Pancreas (tissue), 10 donors: ENCODE measurements at regions of chr22 and their contacts with region 1.

Region 1: GRCh38 chr22:21938071-21938822 is 14.4 kb downstream of the PPM1F start:
- DNase-seq: peak; percentile 91 to 100 (median 94)
- ATAC-seq: peak; percentile 91 to 94 (median 91)
- H3K4me3 ChIP-seq: peak overlapping the region; percentile 26 to 60 (median 48)
- H3K27ac ChIP-seq: peak overlapping the region; percentile 89 to 94 (median 92)
- H3K4me1 ChIP-seq: peaks cover 0 to 19% (median 14%) of the 10 kb centered on the region in 3 donors
- H3K27me3 ChIP-seq: no peaks in the 10 kb centered on the region
- CTCF ChIP-seq: peak; percentile 97 to 100 (median 100)

Region 2: GRCh38 chr22:21707677-21708076 is 230.6 kb before region 1 on chr22:
- intact Hi-C with region 1: loop called in 2 of 3 experiments (anchors 5 to 10 kb)
- DNase-seq: no peak
- ATAC-seq: peak in 2 of 4 donors; percentile 14 to 24
- H3K4me3 ChIP-seq: no peak overlapping the region
- H3K27ac ChIP-seq: no peak overlapping the region
- H3K4me1 ChIP-seq: no peaks in the 10 kb centered on the region
- H3K27me3 ChIP-seq: no peaks in the 10 kb centered on the region
- CTCF ChIP-seq: no peak

Region 3: DNA sequence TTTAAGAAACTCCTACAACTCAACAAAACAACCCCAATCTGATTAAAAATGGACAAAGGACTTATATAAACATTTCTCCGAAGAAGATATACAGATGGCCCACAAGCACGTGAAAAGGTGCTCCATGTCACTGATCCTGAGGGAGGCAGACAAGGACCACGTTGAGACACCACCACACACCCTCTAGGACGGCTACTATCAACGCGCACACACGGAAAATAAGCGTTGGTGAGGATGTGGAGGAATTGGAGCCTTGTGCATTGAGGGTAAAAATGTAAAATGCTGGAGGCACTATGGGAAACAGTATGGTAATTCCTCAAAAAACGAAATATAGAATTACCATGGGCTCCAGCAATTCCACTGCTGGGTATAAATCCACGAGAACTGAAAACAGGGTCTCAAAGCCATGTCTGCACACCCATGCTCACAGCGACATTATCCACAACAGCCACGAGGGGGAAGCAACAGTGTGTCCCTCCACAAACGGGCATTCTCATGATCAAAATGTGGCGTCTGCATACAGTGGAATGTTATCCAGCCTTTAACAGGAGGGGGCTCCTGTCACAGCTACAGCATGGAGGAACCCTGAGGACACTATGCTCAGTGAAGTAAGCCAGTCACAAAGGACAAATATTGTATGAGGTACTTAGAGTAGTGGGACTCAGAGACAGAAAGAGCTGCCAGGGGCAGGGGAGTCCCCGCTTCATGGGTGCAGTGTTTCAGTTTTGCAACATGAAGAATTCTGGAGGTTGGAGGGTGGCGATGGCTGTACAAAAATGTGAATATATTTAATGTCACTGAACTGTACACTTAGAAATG is 225.1 kb before region 1 on chr22:
- intact Hi-C with region 1: loop called in 2 of 3 experiments (anchors 5 to 10 kb)
- DNase-seq: peak in 3 of 6 donors; percentile 56 to 73 (median 58)
- ATAC-seq: peak; percentile 81 to 94 (median 88)
- H3K4me3 ChIP-seq: peak overlapping the region in 1 of 4 donors; percentile 3
- H3K27ac ChIP-seq: no peak overlapping the region
- H3K4me1 ChIP-seq: peaks cover 3 to 13% (median 13%) of the 10 kb centered on the region in 3 donors
- H3K27me3 ChIP-seq: no peaks in the 10 kb centered on the region
- CTCF ChIP-seq: peak; percentile 42 to 64 (median 60)